ENCODE measurements at regions of chr4 and their contacts with region 1.

Region 1: GRCh38 chr4:36138220-36138619 is 106.1 kb downstream of the ARAP2 start:
- DNase-seq: no peak
- ATAC-seq: no peak
- H3K4me3 ChIP-seq: no peak overlapping the region
- H3K27ac ChIP-seq: no peak overlapping the region
- H3K4me1 ChIP-seq: no peaks in the 10 kb centered on the region
- H3K27me3 ChIP-seq: no peaks in the 10 kb centered on the region
- CTCF ChIP-seq: no peak
- POLR2A ChIP-seq: no peak

Region 2: DNA sequence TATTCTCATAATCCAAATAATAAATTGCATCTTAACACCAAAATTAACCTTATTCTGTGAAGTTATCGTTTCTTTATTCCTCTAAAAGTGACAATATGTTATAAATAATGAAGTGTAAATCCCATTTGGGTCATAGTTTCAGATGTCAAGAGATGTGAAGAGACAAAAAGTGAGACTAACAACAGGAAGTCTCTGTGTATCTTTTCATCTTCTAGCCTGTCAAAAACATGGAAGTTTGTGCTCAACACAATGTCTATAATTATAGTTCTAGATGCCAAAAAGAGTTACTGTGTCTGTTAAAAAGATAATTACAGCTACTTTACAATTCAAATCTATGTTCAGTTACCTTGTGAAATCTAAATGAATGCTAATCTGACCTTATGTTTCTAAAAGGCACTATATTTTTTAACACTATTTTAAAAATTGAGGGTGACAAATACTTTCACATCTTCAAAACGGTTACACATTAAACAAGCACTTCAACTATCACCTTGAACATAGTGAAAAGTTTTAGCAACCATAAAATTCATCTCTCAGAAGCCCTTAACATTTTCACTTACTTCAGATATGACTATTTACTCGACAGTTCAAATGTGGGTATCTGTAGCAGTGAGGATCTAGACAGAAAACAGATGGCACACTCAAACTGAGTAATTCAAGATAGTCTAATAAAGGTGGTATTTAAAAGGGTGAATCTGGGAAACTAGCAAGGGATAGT is 403.7 kb before region 1 on chr4:
- in situ Hi-C with region 1: no loop called
- intact Hi-C with region 1: no loop called
- DNase-seq: no peak
- ATAC-seq: no peak
- H3K4me3 ChIP-seq: no peak overlapping the region
- H3K27ac ChIP-seq: no peak overlapping the region
- H3K4me1 ChIP-seq: no peaks in the 10 kb centered on the region
- H3K27me3 ChIP-seq: no peaks in the 10 kb centered on the region
- CTCF ChIP-seq: no peak
- POLR2A ChIP-seq: no peak

Region 3: DNA sequence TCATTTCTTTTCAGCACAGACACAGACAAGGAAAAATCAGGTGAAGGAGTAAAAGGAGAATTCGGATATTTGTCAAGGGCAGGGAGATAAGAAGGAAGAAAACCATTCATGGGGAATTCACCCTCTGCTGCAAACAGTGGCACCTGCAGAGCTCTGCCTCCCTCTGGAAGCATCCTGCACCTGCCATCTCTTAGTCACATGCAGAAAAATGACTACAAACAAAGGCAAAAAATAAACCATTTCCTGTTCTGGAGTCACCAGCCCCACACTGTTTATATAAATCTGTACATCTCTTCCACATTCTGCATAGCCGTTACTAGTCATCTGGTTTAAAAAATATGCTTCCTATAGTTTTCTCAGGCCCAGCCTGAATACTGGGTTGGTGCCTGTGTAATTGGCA is 99.2 kb before region 1 on chr4:
- in situ Hi-C with region 1: loop called in 1 of 4 experiments (anchors 25 kb)
- intact Hi-C with region 1: no loop called
- DNase-seq: no peak
- ATAC-seq: no peak
- H3K4me3 ChIP-seq: no peak overlapping the region
- H3K27ac ChIP-seq: no peak overlapping the region
- H3K4me1 ChIP-seq: no peaks in the 10 kb centered on the region
- H3K27me3 ChIP-seq: no peaks in the 10 kb centered on the region
- CTCF ChIP-seq: no peak
- POLR2A ChIP-seq: no peak

Region 4: GRCh38 chr4:36054750-36055467 is 83.3 kb before region 1 on chr4:
- in situ Hi-C with region 1: no loop called
- intact Hi-C with region 1: no loop called
- DNase-seq: no peak
- ATAC-seq: no peak
- H3K4me3 ChIP-seq: no peak overlapping the region
- H3K27ac ChIP-seq: no peak overlapping the region
- H3K4me1 ChIP-seq: no peaks in the 10 kb centered on the region
- H3K27me3 ChIP-seq: no peaks in the 10 kb centered on the region
- CTCF ChIP-seq: no peak
- POLR2A ChIP-seq: no peak

Region 5: GRCh38 chr4:36081185-36081584 is 57.0 kb before region 1 on chr4:
- in situ Hi-C with region 1: loop called in 1 of 4 experiments (anchors 10 kb)
- intact Hi-C with region 1: no loop called
- DNase-seq: no peak
- ATAC-seq: no peak
- H3K4me3 ChIP-seq: no peak overlapping the region
- H3K27ac ChIP-seq: no peak overlapping the region
- H3K4me1 ChIP-seq: no peaks in the 10 kb centered on the region
- H3K27me3 ChIP-seq: no peaks in the 10 kb centered on the region
- CTCF ChIP-seq: no peak
- POLR2A ChIP-seq: no peak

Region 6: GRCh38 chr4:36508394-36508793 is 370.2 kb after region 1 on chr4:
- in situ Hi-C with region 1: no loop called
- intact Hi-C with region 1: no loop called
- DNase-seq: no peak
- ATAC-seq: no peak
- H3K4me3 ChIP-seq: no peak overlapping the region
- H3K27ac ChIP-seq: no peak overlapping the region
- H3K4me1 ChIP-seq: no peaks in the 10 kb centered on the region
- H3K27me3 ChIP-seq: no peaks in the 10 kb centered on the region
- CTCF ChIP-seq: no peak
- POLR2A ChIP-seq: no peak

Region 7: GRCh38 chr4:36624030-36624429 is 485.8 kb after region 1 on chr4:
- in situ Hi-C with region 1: no loop called
- intact Hi-C with region 1: no loop called
- DNase-seq: no peak
- ATAC-seq: no peak
- H3K4me3 ChIP-seq: no peak overlapping the region
- H3K27ac ChIP-seq: no peak overlapping the region
- H3K4me1 ChIP-seq: no peaks in the 10 kb centered on the region
- H3K27me3 ChIP-seq: no peaks in the 10 kb centered on the region
- CTCF ChIP-seq: no peak
- POLR2A ChIP-seq: no peak